Activated T-helper 1 cell treated with anti-CD3 and anti-CD28 coated beads, Interleukin-12 subunit alpha, Interleukin-12 subunit beta, Interleukin-2, Interleukin-4 antibody, amounts not matched to agents 30 ng/mL and 10 ng/mL and 1 ng/mL, durations not matched to agents 14 hours and 24 hours and 36 hours (primary cell): ENCODE measurements at regions of chr14 and their contacts with region 1.

Region 1: GRCh38 chr14:74860906-74861733 is 14.8 kb downstream of the PROX2 start:
- DNase-seq: peak; percentile 81
- H3K4me3 Mint-ChIP-seq: no peak overlapping the region
- H3K27ac Mint-ChIP-seq: no peak overlapping the region
- H3K4me1 Mint-ChIP-seq: peaks cover 12% of the 10 kb centered on the region
- H3K27me3 Mint-ChIP-seq: peaks cover 1% of the 10 kb centered on the region

Region 2: GRCh38 chr14:74655599-74656389 is 205.3 kb before region 1 on chr14:
- intact Hi-C with region 1: no loop called
- DNase-seq: no peak
- H3K4me3 Mint-ChIP-seq: no peak overlapping the region
- H3K27ac Mint-ChIP-seq: no peak overlapping the region
- H3K4me1 Mint-ChIP-seq: peaks cover 11% of the 10 kb centered on the region
- H3K27me3 Mint-ChIP-seq: no peaks in the 10 kb centered on the region

Region 3: DNA sequence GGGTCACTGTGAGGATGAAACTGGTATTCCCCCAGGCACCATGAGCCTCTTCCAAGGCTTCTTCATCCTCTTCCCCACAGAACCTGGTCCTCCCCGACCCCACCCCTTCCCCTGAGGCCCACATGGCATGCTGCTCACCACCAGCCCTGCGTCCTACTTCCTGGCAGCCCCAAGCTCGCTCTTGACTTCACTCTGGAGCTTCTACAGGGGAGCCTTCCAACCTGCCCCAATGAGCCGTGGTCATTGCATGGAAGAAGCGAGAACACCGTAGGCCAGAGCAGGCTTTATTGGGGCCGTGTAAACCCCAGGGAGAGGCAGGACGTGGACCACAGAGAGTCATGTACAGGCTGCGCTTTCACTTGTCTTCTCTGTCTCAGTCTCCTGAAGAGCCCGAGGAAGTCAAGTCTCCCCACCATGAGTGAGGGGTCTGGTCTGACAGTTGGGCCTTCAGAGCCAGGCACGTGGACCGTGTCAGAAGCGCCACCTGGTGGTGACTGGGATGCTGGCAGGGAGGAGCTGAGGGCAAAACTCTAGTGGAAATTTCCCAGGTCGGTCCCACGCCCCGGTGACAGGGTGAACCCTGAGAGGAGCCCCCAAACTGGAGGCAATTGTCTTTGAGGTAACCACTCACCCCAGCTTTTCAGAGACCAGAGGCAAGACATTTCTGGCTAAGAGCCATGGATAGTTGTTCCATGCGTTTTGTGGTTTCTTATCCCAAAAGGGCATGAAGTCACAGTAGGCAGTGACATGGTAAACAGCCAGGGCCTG is 44.4 kb after region 1 on chr14:
- intact Hi-C with region 1: loop called (anchors 1 kb)
- DNase-seq: peak; percentile 61
- H3K4me3 Mint-ChIP-seq: no peak overlapping the region
- H3K27ac Mint-ChIP-seq: peak overlapping the region; percentile 40
- H3K4me1 Mint-ChIP-seq: peaks cover 5% of the 10 kb centered on the region
- H3K27me3 Mint-ChIP-seq: no peaks in the 10 kb centered on the region

Region 4: DNA sequence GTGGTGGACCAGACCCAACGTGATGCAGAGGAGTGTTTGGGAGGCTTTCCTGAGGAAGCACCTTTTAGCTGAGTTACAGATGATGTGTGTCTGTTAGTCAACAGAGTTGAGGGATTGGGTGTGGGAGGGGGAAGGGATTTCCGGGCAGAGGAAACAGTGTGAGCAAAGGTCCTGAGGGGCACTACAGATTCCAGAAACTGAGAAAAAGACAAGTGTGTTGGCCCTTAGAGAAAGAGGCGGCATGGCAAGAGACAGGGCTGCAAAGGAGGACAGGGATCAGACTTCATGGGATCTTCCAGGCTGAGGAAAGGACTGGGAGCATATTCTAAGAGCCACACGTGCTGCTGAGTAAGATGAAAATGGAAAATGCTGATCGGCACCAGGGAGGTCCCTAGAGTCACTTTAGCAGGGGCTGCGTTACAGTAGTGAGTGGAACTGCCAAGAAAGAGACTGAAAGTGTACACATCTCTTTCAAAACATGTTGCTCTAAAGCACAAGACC is 71.3 kb after region 1 on chr14:
- intact Hi-C with region 1: no loop called
- DNase-seq: no peak
- H3K4me3 Mint-ChIP-seq: no peak overlapping the region
- H3K27ac Mint-ChIP-seq: no peak overlapping the region
- H3K4me1 Mint-ChIP-seq: peaks cover 18% of the 10 kb centered on the region
- H3K27me3 Mint-ChIP-seq: peaks cover 7% of the 10 kb centered on the region

Region 5: DNA sequence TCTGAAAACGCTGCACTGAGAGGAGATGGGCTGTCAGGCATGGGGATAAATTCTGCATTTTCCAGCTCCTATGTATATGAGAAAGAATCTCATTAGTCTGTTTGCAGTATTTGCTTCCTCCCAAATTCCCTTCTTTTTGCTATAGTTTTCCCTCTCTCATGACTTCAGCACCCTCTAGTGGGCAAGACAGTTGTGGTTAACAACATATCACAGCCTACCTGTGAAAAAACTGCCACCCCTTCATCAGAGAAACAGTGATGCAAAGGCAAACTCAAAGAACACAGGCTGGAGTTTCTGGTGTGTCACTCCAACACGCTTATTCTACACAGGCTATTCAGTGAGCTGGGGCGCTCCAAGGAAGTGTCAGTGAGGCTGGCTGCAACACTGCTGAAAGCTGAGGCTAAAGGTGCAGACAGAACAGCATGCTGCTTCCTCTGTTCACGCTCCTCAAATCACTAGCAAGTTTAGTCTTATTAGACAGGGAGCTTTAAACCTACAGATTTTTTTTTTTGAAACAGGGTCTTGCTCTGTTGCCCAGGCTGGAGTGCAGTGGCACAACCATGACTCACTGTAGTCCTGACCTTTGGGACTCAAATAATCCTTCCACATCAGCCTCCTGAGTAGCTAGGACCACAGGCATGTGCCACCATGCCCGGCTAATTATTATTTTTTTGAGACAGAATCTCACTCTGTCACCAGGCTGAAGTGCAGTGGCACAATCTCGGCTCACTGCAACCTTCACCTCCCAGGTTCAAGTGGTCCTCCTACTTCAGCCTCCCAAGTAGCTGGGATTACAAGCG is 227.7 kb after region 1 on chr14:
- intact Hi-C with region 1: loop called (anchors 1 kb)
- DNase-seq: peak; percentile 30
- H3K4me3 Mint-ChIP-seq: no peak overlapping the region
- H3K27ac Mint-ChIP-seq: no peak overlapping the region
- H3K4me1 Mint-ChIP-seq: no peaks in the 10 kb centered on the region
- H3K27me3 Mint-ChIP-seq: no peaks in the 10 kb centered on the region